Head of caudate nucleus (tissue), 42 donors: ENCODE measurements at regions of chr4 and their contacts with region 1.

Region 1: GRCh38 chr4:117768609-117769008 is 265.7 kb upstream of the NDST3 start:
- DNase-seq: no peak

Region 2: DNA sequence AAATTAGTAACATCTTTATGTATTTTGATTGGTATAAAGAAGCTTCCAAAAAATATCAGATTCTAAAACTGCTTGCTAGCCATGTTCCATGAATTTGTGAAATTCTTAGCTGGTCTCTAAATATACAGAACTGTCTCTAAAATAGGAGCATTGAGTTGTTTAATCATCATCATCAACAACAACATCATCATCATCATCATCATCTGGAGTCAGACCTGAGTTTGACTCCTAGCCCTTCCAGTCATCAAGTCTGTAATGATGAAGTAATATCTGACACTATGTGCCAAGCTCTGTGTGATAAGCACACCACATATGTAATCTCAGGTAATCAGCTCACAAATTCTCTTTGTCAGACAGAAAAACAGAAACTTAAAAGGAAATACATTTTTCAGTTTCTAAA is 867.1 kb before region 1 on chr4:
- intact Hi-C with region 1: no loop called
- DNase-seq: no peak

Region 3: GRCh38 chr4:117678861-117679260 is 89.7 kb before region 1 on chr4:
- intact Hi-C with region 1: no loop called
- DNase-seq: no peak

Region 4: DNA sequence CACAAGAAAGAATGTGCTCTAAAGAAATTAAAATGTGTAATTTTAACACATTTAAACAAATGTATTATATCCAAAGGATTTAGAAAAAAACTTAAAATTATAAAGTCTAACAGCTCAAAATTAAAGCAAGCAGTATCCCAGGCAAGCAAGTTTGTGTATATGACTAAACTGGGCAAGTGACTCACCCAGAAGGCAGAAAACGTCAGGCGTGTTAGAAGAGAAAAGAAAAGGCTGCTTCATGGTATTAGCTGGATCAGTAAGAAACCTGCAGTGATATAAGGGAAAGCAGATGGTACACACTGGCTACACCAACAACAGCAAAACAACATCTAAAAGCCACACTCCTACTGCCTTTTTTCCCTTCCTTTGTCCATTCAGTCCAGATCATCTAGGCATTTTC is 15.1 kb after region 1 on chr4:
- intact Hi-C with region 1: loop called (anchors 1 kb)
- DNase-seq: no peak

Region 5: DNA sequence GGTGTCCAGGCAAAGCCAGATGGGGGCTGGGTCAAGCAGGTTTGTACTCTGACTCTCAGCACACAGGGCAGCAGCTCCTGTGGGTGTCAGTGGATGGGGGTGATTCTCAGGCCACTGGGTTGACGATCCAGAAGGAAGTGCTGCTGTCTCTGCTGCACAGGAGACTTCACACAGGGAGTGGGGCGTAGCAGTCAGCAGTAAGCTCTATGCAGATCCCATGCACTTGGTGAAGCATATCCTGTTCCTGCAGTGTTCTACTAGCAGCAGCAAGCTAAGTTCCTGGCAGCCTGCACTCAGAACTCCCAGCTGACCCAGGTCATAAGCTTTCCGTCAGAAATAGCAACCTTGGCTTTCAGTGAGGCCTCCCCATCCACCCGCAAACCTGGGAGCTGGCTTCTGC is 148.1 kb after region 1 on chr4:
- intact Hi-C with region 1: no loop called
- DNase-seq: no peak

Region 6: GRCh38 chr4:117949621-117950020 is 181.0 kb after region 1 on chr4:
- intact Hi-C with region 1: no loop called
- DNase-seq: no peak